ENCODE measurements at regions of chr1 and their contacts with region 1.

Region 1: GRCh38 chr1:209989525-209989924 is 51.5 kb downstream of the SYT14 start:
- DNase-seq: no peak
- H3K4me3 ChIP-seq: no peak overlapping the region
- H3K27ac ChIP-seq: no peak overlapping the region
- H3K4me1 ChIP-seq: no peaks in the 10 kb centered on the region
- H3K27me3 ChIP-seq: no peaks in the 10 kb centered on the region
- CTCF ChIP-seq: peak in 1 of 3 experiments; percentile 15

Region 2: GRCh38 chr1:209860293-209860881 is 129.1 kb before region 1 on chr1:
- intact Hi-C with region 1: loop called (anchors 2 kb)
- DNase-seq: peak in 1 of 2 donors; percentile 75
- H3K4me3 ChIP-seq: no peak overlapping the region
- H3K27ac ChIP-seq: no peak overlapping the region
- H3K4me1 ChIP-seq: no peaks in the 10 kb centered on the region
- H3K27me3 ChIP-seq: no peaks in the 10 kb centered on the region
- CTCF ChIP-seq: peak; percentile 39 to 81 (median 79)

Region 3: GRCh38 chr1:209929751-209930150 is 59.8 kb before region 1 on chr1:
- intact Hi-C with region 1: no loop called
- DNase-seq: no peak
- H3K4me3 ChIP-seq: no peak overlapping the region
- H3K27ac ChIP-seq: no peak overlapping the region
- H3K4me1 ChIP-seq: no peaks in the 10 kb centered on the region
- H3K27me3 ChIP-seq: no peaks in the 10 kb centered on the region
- CTCF ChIP-seq: no peak

Region 4: DNA sequence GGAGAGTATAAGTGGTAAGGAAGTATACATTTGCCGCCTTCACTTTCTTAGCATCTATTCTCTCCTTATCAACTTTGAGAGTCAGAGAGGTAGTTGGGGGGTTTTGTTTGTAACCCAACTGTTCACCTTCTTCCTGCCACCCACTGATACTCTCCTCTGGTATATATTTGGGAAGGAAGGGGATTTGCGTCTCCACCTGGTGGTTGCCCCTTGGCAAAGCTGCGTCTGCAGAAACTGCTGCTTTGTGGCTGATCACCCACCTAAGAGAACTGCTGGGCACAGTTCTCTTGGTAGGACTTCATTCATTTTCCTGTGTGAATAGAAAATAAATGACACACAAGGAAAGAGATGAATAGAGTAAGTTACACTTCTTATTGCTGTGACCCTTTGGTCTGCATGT is 35.5 kb after region 1 on chr1:
- intact Hi-C with region 1: no loop called
- DNase-seq: no peak
- H3K4me3 ChIP-seq: no peak overlapping the region
- H3K27ac ChIP-seq: no peak overlapping the region
- H3K4me1 ChIP-seq: no peaks in the 10 kb centered on the region
- H3K27me3 ChIP-seq: no peaks in the 10 kb centered on the region
- CTCF ChIP-seq: no peak

Measured in ascending aorta (tissue), 2 donors.